HCT116 (cell line): ENCODE measurements at regions of chr19 and their contacts with region 1.

Region 1: DNA sequence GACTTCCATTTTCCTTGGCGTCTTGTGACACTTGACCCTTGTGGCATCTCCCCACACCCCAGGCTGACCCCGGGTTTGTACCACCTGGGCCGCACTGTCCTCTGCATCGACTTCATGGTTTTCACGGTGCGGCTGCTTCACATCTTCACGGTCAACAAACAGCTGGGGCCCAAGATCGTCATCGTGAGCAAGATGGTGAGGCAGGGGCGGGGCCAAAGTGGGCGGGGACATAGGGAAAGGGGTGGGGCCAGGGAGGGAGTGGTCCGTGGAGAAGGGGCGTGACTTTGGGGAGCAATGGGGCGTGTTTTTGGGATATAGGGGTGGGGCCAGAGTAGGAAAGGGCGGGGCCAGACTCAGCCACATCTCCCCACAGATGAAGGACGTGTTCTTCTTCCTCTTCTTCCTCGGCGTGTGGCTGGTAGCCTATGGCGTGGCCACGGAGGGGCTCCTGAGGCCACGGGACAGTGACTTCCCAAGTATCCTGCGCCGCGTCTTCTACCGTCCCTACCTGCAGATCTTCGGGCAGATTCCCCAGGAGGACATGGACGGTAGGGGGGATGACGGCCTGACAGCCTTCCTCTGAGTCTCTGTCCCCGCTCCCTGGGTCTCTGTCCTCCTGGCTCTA is 42.8 kb downstream of the TRPM4 start:
- DNase-seq: no peak
- ATAC-seq: peak; percentile 92
- H3K4me3 ChIP-seq: no peak overlapping the region
- H3K27ac ChIP-seq: no peak overlapping the region
- H3K4me1 ChIP-seq: peaks cover 0 to 3% of the 10 kb centered on the region in 2 experiments; a peak in 1 of 4 replicates
- H3K27me3 ChIP-seq: no peaks in the 10 kb centered on the region
- CTCF ChIP-seq: no peak
- POLR2A ChIP-seq: no peak
- RAD21 ChIP-seq: no peak

Region 2: GRCh38 chr19:49073514-49074378 is 126.6 kb before region 1 on chr19:
- CTCF ChIA-PET with region 1: interaction called, 13 read pairs
- POLR2A ChIA-PET with region 1: no interaction called
- RAD21 ChIA-PET with region 1: interaction called, 3 to 5 read pairs
- intact Hi-C with region 1: loop called (anchors 2 kb)
- DNase-seq: peak; percentile 45
- ATAC-seq: peak; percentile 88
- H3K4me3 ChIP-seq: no peak overlapping the region
- H3K27ac ChIP-seq: no peak overlapping the region
- H3K4me1 ChIP-seq: peaks cover 10 to 11% of the 10 kb centered on the region in 2 experiments
- H3K27me3 ChIP-seq: no peaks in the 10 kb centered on the region
- CTCF ChIP-seq: peak; percentile 36 to 65 (median 49)
- POLR2A ChIP-seq: no peak
- RAD21 ChIP-seq: peak; percentile 68

Region 3: GRCh38 chr19:49118565-49119410 is 81.6 kb before region 1 on chr19 and contains the start of gene C19orf73:
- CTCF ChIA-PET with region 1: interaction called, 13 read pairs
- POLR2A ChIA-PET with region 1: no interaction called
- RAD21 ChIA-PET with region 1: no interaction called
- intact Hi-C with region 1: no loop called
- DNase-seq: peak; percentile 84
- ATAC-seq: peak; percentile 81
- H3K4me3 ChIP-seq: peak within 1 kb of the TSS; percentile 59 to 66
- H3K27ac ChIP-seq: peak within 1 kb of the TSS; percentile 97
- H3K4me1 ChIP-seq: peaks cover 18 to 37% of the 10 kb centered on the region in 2 experiments
- H3K27me3 ChIP-seq: no peaks in the 10 kb centered on the region
- CTCF ChIP-seq: no peak
- POLR2A ChIP-seq: peak; percentile 87
- RAD21 ChIP-seq: no peak
- total RNA-seq, gene C19orf73: 2.2 TPM

Region 4: GRCh38 chr19:49148784-49149651 is 51.3 kb before region 1 on chr19:
- CTCF ChIA-PET with region 1: interaction called, 13 read pairs
- POLR2A ChIA-PET with region 1: no interaction called
- RAD21 ChIA-PET with region 1: no interaction called
- intact Hi-C with region 1: no loop called
- DNase-seq: peak; percentile 88
- ATAC-seq: peak; percentile 51
- H3K4me3 ChIP-seq: peak overlapping the region; percentile 90 to 95
- H3K27ac ChIP-seq: peak overlapping the region; percentile 94
- H3K4me1 ChIP-seq: peaks cover 25 to 57% of the 10 kb centered on the region in 2 experiments
- H3K27me3 ChIP-seq: no peaks in the 10 kb centered on the region
- CTCF ChIP-seq: no peak
- POLR2A ChIP-seq: peak; percentile 49
- RAD21 ChIP-seq: no peak

Region 5: DNA sequence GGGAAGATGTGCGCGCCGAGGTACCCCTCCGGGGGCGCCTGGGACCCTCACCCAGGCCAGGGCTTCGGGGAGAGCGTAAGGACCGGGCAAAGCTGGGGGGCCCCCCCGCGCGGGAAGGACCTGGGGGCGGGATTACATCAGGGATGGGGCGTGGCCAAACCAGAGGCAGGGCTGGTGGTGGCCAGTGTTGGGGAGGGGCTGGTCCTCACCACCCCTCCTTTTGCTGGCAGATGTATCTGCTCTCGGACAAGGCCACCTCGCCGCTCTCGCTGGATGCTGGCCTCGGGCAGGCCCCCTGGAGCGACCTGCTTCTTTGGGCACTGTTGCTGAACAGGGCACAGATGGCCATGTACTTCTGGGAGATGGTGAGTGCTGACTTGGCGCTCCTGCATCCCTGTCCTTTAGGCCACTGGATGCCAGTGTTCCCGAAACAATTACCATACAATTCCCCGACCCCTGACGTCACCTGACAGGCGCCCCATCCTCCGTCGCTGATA is 17.5 kb before region 1 on chr19:
- CTCF ChIA-PET with region 1: interaction called, 14 read pairs
- POLR2A ChIA-PET with region 1: interaction called, 3 read pairs
- RAD21 ChIA-PET with region 1: no interaction called
- intact Hi-C with region 1: no loop called
- DNase-seq: no peak
- ATAC-seq: no peak
- H3K4me3 ChIP-seq: no peak overlapping the region
- H3K27ac ChIP-seq: no peak overlapping the region
- H3K4me1 ChIP-seq: no peaks in the 10 kb centered on the region
- H3K27me3 ChIP-seq: no peaks in the 10 kb centered on the region
- CTCF ChIP-seq: no peak
- POLR2A ChIP-seq: no peak
- RAD21 ChIP-seq: no peak